Mammary epithelial cell (primary cell): ENCODE measurements at regions of chr7 and their contacts with region 1.

Region 1: DNA sequence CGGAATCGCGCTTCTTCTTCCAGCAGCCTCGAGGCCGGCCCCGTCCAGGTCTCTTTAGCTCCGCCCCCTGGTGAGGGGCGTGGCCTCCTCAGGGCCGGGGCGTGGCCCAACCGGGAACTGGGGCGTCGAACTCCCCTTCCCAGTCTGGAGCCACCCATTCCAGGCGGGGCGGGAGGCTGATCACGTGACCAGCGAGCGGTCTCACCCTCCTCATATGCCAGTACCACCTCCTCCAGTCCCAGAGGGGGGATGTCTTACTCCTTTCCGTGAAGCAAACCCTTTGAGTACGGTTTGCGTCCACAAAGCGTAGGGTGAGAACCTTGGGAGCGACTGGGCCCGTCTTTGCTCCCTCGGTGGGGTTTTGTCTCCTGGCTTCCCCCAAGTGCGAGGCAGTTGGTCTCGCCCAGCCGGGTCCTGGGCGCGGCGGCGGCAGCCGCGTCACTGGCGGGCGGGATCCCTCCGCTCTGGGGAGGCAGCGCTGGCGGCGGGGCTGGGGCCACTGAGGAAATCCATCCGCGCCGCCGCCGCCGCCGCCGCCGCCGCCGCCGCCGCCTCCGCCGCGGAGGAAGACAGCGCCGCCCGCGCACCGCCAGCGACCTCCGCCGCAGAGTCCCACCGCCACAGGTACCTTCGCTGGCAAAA is at the start of gene GNB2:
- DNase-seq: peak; percentile 99
- H3K4me3 ChIP-seq: peak within 1 kb of the TSS; percentile 82 to 93 (median 84)
- H3K27ac ChIP-seq: peak within 1 kb of the TSS; percentile 89
- H3K4me1 ChIP-seq: peaks cover 5% of the 10 kb centered on the region
- H3K27me3 ChIP-seq: no peaks in the 10 kb centered on the region
- CTCF ChIP-seq: no peak
- total RNA-seq, gene GNB2: 91.4 to 243 TPM

Region 2: DNA sequence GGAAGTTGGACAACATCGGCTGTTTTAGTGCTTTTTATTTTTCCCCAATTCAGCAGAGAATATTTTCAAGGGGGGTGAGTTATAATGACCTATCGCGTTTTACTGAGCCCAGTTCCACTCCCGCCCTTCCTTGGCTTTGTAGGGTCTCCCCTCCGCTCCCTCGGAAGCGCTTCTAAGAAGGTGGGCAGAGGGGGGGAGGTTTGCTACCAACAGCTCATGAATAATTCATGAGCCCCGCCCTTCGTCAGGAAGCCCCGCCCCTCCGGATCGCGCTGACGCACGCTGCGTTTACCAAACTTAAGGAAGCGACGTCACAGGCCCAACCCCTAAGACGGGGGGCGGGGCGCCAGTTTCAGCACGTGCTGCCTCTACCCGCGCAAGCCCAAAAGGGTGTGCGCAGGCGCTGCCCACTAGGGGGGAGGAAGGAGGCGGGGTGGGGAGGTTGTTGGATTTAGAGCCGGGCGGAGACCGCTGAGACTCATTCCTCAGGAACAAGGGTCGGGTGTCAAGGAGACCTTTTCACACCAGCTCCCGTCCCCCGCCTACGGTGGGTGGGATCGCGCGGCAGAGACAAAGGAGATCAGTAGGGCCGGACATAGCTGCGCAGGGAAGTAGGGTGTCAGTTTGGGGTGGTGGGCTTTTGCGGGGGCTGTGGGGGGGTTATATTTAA is 244.3 kb before region 1 on chr7:
- CTCF ChIA-PET with region 1: no interaction called
- dilution Hi-C with region 1: loop called (anchors 10 kb)
- in situ Hi-C with region 1: no loop called
- intact Hi-C with region 1: no loop called
- DNase-seq: peak; percentile 99
- H3K4me3 ChIP-seq: peak overlapping the region; percentile 83 to 91 (median 84)
- H3K27ac ChIP-seq: peak overlapping the region; percentile 95
- H3K4me1 ChIP-seq: peaks cover 20% of the 10 kb centered on the region
- H3K27me3 ChIP-seq: no peaks in the 10 kb centered on the region
- CTCF ChIP-seq: no peak

Region 3: DNA sequence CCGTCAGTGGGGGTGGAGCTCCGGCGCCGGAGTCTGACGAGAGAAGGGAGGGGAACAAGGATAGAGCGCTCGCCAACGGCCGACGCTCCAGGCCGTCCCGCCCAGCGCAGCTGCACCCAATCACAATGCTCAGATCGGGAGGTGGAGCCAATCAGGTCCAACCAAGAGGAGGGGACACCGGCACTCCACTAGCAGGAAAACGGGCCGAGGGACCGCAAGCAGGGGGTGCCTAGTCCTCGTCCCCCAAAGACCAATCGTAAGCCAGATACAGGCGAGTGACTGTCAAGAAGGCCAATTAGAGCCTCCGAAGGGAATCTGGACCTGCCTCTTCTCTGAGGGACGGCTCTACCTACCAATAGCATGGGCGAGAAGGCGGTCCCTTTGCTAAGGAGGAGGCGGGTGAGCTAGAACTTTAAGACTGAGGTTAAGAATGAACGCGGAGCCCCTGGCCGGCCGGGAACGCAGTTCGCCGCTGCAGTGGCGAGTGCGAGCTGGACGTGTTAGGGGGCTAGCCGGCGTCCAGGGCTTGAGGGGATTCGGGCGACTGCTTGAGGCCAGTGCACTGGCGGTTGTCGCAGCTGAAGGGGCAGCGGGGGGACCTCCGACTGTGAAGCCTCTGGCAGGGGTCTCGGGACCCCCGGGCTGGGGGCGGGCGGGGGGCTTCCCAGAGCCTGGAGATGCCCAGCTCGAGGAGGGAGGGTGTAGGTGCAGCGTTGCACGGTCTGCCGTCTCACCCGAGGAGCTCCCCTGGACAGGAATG is 87.0 kb before region 1 on chr7 and contains the start of gene FBXO24:
- CTCF ChIA-PET with region 1: no interaction called
- dilution Hi-C with region 1: no loop called
- in situ Hi-C with region 1: loop called in 1 of 2 experiments (anchors 5 kb)
- intact Hi-C with region 1: loop called (anchors 1 kb)
- DNase-seq: peak; percentile 100
- H3K4me3 ChIP-seq: peak within 1 kb of the TSS; percentile 80 to 98 (median 88)
- H3K27ac ChIP-seq: peak within 1 kb of the TSS; percentile 74
- H3K4me1 ChIP-seq: peaks cover 20% of the 10 kb centered on the region
- H3K27me3 ChIP-seq: no peaks in the 10 kb centered on the region
- CTCF ChIP-seq: no peak
- total RNA-seq, gene FBXO24: 0.17 to 0.45 TPM

Region 4: GRCh38 chr7:100611974-100612729 is 61.3 kb before region 1 on chr7 and contains the start of gene MOSPD3:
- CTCF ChIA-PET with region 1: no interaction called
- dilution Hi-C with region 1: no loop called
- in situ Hi-C with region 1: no loop called
- intact Hi-C with region 1: loop called (anchors 5 kb)
- DNase-seq: peak; percentile 98
- H3K4me3 ChIP-seq: peak within 1 kb of the TSS; percentile 67 to 84 (median 70)
- H3K27ac ChIP-seq: peak within 1 kb of the TSS; percentile 86
- H3K4me1 ChIP-seq: peaks cover 6% of the 10 kb centered on the region
- H3K27me3 ChIP-seq: no peaks in the 10 kb centered on the region
- CTCF ChIP-seq: no peak
- total RNA-seq, gene MOSPD3: 6.8 to 16.3 TPM

Region 5: DNA sequence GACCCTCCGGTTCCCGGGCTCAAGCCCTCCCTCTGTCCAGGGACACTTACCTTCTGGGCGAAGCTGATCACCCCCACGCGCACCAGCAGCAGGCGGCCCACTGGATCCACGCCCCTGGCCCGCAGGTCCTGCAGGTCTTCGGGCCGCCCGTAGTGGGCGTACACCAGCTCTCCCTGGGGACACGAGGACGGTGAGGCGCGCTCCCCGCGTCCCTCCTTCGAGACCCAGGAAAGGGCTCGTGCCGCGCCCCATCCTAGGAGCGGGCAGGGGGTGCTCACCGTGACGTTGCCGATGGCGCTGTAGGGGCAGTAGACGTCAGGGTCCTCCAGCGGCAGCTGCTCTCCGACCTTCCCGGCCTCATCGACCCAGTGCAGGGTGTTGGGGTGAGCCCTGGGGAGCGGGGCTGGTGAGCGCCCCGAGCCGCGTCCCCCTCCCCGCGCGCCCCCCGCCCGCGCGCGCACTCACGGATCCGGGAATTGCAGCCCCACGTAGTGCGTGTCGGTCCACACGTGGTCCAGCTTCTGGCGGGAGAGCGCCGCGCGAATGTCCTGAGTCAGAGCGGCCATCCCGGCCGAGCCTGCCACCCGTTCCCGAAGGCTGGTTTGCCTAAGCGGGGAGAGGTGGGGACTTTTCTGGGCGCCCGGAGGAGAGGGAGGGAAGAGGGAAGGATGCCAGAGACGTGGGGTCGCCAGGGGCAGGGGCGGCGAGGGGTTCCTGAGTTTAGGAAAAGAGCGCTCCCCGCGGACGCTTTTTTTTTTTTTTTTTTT is 40.3 kb before region 1 on chr7:
- CTCF ChIA-PET with region 1: no interaction called
- dilution Hi-C with region 1: no loop called
- in situ Hi-C with region 1: no loop called
- intact Hi-C with region 1: loop called (anchors 5 kb)
- DNase-seq: peak; percentile 12
- H3K4me3 ChIP-seq: peak overlapping the region; percentile 42 to 54 (median 48)
- H3K27ac ChIP-seq: no peak overlapping the region
- H3K4me1 ChIP-seq: peaks cover 8% of the 10 kb centered on the region
- H3K27me3 ChIP-seq: no peaks in the 10 kb centered on the region
- CTCF ChIP-seq: peak in 1 of 2 donors; percentile 19